PC-9 (cell line): ENCODE measurements at regions of chr6 and their contacts with region 1.

Region 1: GRCh38 chr6:133388731-133389130 is 147.6 kb downstream of the EYA4 start:
- DNase-seq: no peak
- H3K4me3 ChIP-seq: no peak overlapping the region
- H3K27ac ChIP-seq: no peak overlapping the region
- H3K4me1 ChIP-seq: no peaks in the 10 kb centered on the region
- H3K27me3 ChIP-seq: no peaks in the 10 kb centered on the region
- CTCF ChIP-seq: no peak

Region 2: GRCh38 chr6:133062077-133062476 is 326.7 kb before region 1 on chr6:
- CTCF ChIA-PET with region 1: no interaction called
- POLR2A ChIA-PET with region 1: interaction called, 14 read pairs
- intact Hi-C with region 1: no loop called
- DNase-seq: no peak
- H3K4me3 ChIP-seq: no peak overlapping the region
- H3K27ac ChIP-seq: no peak overlapping the region
- H3K4me1 ChIP-seq: no peaks in the 10 kb centered on the region
- H3K27me3 ChIP-seq: no peaks in the 10 kb centered on the region
- CTCF ChIP-seq: no peak

Region 3: DNA sequence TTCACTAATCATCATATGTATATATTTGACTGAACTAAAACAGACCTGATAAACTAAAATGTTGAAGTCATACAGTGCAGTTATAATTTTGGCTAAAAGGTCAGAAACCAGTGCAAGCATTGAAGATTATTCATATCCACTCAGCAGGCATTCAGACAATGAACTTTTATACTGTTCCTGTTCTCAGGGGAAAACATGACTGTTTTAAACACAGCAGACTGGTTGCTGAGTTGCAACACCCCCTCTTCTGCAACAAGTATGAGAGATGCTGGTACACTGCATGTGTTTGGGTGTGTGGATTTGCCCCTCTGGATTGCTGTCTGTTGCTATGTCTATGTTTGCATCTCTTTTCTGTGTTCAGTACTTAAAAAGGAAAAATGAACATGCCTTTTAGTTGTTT is 59.2 kb after region 1 on chr6:
- CTCF ChIA-PET with region 1: no interaction called
- POLR2A ChIA-PET with region 1: no interaction called
- intact Hi-C with region 1: no loop called
- DNase-seq: no peak
- H3K4me3 ChIP-seq: no peak overlapping the region
- H3K27ac ChIP-seq: no peak overlapping the region
- H3K4me1 ChIP-seq: no peaks in the 10 kb centered on the region
- H3K27me3 ChIP-seq: no peaks in the 10 kb centered on the region
- CTCF ChIP-seq: no peak